ENCODE measurements at regions of chr2 and their contacts with region 1.

Region 1: GRCh38 chr2:218245214-218245613 is 15.6 kb upstream of the GPBAR1 start:
- DNase-seq: no peak
- ATAC-seq: no peak
- H3K4me3 Mint-ChIP-seq: no peak overlapping the region
- H3K27ac Mint-ChIP-seq: peak overlapping the region; percentile 25
- H3K4me1 Mint-ChIP-seq: peaks cover 41% of the 10 kb centered on the region
- H3K27me3 Mint-ChIP-seq: no peaks in the 10 kb centered on the region

Region 2: DNA sequence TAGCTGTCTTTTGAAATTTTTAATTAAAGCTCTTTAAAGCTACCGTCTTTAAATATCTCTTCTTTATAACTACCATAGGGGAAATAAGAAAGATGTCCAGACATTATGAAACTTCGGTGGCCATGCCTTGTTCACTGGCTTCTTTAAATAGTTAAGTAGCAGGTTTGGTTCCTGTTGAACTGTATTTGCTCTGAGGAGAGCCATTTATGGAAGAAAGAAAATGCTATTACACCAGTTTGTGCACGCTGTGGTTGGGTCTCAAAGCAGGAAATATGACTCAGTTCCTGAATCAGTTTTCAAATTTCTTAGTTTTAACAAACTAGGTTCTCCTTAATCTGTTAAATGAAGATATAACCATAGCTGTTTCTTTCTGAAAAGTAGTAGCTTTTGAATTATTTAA is 16.0 kb before region 1 on chr2:
- CTCF ChIA-PET with region 1: interaction called, 20 read pairs
- POLR2A ChIA-PET with region 1: interaction called, 5 read pairs
- DNase-seq: peak; percentile 77
- ATAC-seq: peak; percentile 83
- H3K4me3 Mint-ChIP-seq: peak overlapping the region; percentile 58
- H3K27ac Mint-ChIP-seq: peak overlapping the region; percentile 88
- H3K4me1 Mint-ChIP-seq: peaks cover 80% of the 10 kb centered on the region
- H3K27me3 Mint-ChIP-seq: no peaks in the 10 kb centered on the region